ENCODE measurements at regions of chr17 and their contacts with region 1.

Region 1: GRCh38 chr17:50094753-50095619 is at the start of gene PDK2:
- DNase-seq: peak; percentile 98
- ATAC-seq: peak; percentile 96
- H3K4me3 Mint-ChIP-seq: peak within 1 kb of the TSS; percentile 96
- H3K27ac Mint-ChIP-seq: peak within 1 kb of the TSS; percentile 91
- H3K4me1 Mint-ChIP-seq: peaks cover 24% of the 10 kb centered on the region
- H3K27me3 Mint-ChIP-seq: no peaks in the 10 kb centered on the region
- total RNA-seq, gene PDK2: 13.6 to 20.9 TPM

Region 2: DNA sequence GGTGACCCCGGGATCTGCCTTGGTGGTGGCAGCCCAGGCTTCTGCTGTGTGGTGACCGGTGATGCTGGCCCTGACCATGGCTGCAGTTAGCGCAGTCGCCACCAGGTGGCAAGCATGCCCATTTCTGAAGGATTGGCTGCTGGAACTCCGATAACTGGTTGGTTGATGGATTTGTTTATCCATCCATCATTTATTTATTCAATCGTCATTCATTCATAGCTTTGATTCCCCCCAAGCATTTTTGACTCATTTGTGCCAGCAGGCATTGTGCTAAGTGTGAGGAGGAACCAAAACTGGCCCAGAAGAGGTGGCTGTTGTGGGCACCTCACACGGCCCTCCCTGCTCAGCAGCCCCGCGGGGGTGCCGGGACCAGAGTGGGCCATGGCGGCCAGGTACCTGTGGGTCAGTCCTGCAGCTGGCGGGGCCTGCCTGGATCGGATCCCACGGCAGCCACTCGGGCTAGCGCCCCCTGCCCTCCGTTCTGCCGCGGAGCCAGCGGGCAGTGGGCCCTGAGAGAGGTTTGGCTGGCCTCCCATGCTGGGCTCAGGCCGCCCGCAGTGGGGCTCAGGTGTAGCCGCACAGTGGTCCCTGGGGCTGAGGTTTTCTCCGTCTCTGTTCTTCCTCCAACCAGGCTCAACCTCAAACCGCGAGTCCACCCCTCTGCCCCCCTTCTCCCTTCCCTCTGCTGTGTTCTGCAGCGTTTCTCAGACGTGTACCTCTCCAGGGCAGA is 67.9 kb before region 1 on chr17:
- CTCF ChIA-PET with region 1: interaction called, 58 read pairs
- DNase-seq: peak; percentile 79
- ATAC-seq: peak; percentile 74
- H3K4me3 Mint-ChIP-seq: no peak overlapping the region
- H3K27ac Mint-ChIP-seq: no peak overlapping the region
- H3K4me1 Mint-ChIP-seq: peaks cover 14% of the 10 kb centered on the region
- H3K27me3 Mint-ChIP-seq: peaks cover 26% of the 10 kb centered on the region

Region 3: GRCh38 chr17:50107790-50108414 is 12.9 kb after region 1 on chr17:
- CTCF ChIA-PET with region 1: interaction called, 20 read pairs
- DNase-seq: no peak
- ATAC-seq: no peak
- H3K4me3 Mint-ChIP-seq: no peak overlapping the region
- H3K27ac Mint-ChIP-seq: no peak overlapping the region
- H3K4me1 Mint-ChIP-seq: no peaks in the 10 kb centered on the region
- H3K27me3 Mint-ChIP-seq: no peaks in the 10 kb centered on the region

Region 4: DNA sequence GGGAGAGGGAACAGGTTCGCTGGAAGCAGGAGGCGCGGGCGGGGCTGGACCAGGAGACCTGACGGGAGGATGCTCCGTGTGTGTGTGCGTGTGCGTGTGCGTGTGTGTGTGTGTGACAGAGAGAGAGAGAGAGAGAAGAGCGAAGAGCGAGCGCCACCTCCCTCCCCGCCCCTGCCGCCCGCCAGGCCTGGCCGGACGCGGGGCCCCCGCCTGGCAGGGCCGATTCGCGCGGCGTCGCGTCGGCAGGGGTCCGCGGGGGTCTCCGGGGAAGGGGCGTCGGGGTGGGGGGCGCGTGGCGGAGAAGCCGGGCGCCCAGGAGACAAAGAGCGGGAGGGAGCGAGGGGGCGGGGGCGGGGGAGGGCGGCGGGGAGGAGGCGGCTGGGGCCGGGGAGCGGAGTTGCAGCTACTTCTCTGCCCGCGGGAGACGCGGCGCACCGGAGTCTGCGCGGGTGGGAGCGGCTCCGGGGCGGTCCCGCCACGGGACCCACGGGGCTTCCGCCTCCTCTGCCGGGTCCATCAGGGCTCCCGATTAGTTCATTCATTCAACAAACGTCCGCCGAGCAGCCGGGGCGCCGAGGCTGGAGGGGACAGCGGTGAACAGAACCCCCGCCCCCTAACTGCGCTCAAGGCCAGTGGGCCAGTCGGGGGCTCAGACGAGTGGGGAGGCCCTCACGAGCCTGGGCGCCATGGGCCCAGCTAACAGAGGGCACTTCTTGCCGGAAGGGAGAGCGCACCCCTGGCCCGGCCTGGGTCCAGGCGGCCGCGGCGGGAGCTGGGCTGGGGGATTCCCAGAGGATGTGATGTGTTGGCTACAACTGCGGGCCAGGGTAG is 35.0 kb after region 1 on chr17 and contains the start of gene SAMD14:
- CTCF ChIA-PET with region 1: interaction called, 10 read pairs
- DNase-seq: peak; percentile 61
- ATAC-seq: peak; percentile 73
- H3K4me3 Mint-ChIP-seq: peak within 1 kb of the TSS; percentile 58
- H3K27ac Mint-ChIP-seq: no peak within 1 kb of the TSS
- H3K4me1 Mint-ChIP-seq: peaks cover 32% of the 10 kb centered on the region
- H3K27me3 Mint-ChIP-seq: peaks cover 32% of the 10 kb centered on the region
- total RNA-seq, gene SAMD14: 0.35 to 1.1 TPM

Region 5: DNA sequence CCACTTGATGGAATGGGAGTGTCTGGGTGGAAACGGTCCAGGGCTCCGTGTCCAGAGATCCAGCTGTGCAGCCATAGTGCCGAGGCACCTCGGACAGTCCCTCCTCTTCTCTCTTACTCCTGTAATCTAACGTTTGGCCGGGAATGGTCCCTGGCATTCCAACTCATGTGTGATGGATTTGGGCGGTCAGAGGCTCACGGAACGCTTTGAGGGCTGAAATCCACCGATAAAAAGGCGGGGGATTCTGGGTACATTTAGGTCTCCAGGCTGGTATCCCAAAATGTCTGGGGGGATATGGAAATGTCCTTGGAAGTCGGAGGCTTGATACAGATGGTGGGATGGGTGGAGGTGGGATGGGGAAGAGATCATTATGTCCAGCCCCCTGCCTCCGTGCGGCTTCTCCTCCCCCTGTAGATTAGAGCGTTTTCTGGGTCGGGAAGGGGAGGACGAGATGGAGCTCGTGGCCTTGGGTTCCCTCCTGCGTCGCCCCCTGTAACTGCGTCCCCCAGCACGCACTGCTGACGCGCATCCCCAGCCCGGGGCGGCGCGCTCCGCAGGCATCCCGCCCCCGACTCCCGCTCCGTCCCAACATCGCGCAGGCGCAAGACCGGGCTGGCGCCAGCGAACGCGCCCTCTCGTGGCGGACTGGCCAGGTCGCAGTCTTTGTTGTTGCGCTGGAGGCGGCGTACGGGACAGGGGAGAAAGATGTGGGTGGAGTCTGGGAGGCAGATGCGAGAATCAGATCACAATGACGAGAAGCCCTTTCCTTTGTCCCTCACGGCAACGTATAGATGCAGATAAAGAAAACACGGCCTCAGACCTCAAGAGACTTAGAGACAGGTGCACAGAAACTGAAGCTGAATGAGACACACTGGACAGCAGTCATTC is 66.3 kb after region 1 on chr17:
- CTCF ChIA-PET with region 1: interaction called, 22 read pairs
- DNase-seq: peak; percentile 96
- ATAC-seq: peak; percentile 98
- H3K4me3 Mint-ChIP-seq: peak overlapping the region; percentile 77
- H3K27ac Mint-ChIP-seq: peak overlapping the region; percentile 67
- H3K4me1 Mint-ChIP-seq: peaks cover 28% of the 10 kb centered on the region
- H3K27me3 Mint-ChIP-seq: peaks cover 8% of the 10 kb centered on the region

Region 6: DNA sequence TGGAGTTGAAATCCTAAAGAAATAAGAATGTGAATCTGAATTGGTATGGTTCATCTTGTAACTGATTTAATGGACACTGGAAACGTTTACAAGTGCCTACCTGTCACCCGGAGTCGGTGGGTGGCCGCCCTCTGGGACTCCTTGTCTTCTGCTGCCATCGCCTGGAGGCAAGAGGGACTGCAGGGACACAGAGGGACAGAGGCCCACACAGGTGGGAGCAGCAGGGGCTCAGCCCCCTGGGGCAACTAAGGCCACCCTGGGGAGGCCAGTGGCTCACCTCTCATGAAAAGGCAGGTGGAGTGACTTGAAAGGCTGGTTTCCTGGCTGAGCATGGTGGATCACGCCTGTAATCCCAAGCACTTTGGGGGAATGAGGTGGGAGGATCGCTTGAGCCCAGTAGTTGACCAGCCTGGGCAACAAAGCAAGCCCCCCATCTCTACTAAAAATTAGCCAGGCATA is 202.4 kb after region 1 on chr17:
- CTCF ChIA-PET with region 1: interaction called, 16 read pairs
- DNase-seq: peak; percentile 85
- ATAC-seq: peak; percentile 94
- H3K4me3 Mint-ChIP-seq: no peak overlapping the region
- H3K27ac Mint-ChIP-seq: no peak overlapping the region
- H3K4me1 Mint-ChIP-seq: peaks cover 12% of the 10 kb centered on the region
- H3K27me3 Mint-ChIP-seq: peaks cover 5% of the 10 kb centered on the region

Measured in activated CD8-positive, alpha-beta memory T cell treated with anti-CD3 and anti-CD28 coated beads, Interleukin-2, amount 10 ng/mL, durations not matched to agents 7 days and 5 days (primary cell).